SK-N-SH (cell line): ENCODE measurements at regions of chr1 and their contacts with region 1.

Region 1: GRCh38 chr1:27300341-27301051 is 21.5 kb upstream of the TMEM222 start:
- DNase-seq: peak; percentile 90
- H3K4me3 ChIP-seq: peak overlapping the region; percentile 12 to 14; a peak in 2 of 4 replicates
- H3K27ac ChIP-seq: peak overlapping the region; percentile 92 to 99
- H3K4me1 ChIP-seq: peaks cover 28 to 52% of the 10 kb centered on the region in 2 experiments
- H3K27me3 ChIP-seq: no peaks in the 10 kb centered on the region
- CTCF ChIP-seq: peak; percentile 92
- EP300 ChIP-seq: peak; percentile 40 to 70; a peak in 3 of 4 replicates
- RAD21 ChIP-seq: peak; percentile 96

Region 2: GRCh38 chr1:27192039-27192529 is 108.4 kb before region 1 on chr1:
- CTCF ChIA-PET with region 1: interaction called, 18 read pairs
- POLR2A ChIA-PET with region 1: no interaction called
- DNase-seq: no peak
- H3K4me3 ChIP-seq: no peak overlapping the region
- H3K27ac ChIP-seq: no peak overlapping the region
- H3K4me1 ChIP-seq: no peaks in the 10 kb centered on the region
- H3K27me3 ChIP-seq: no peaks in the 10 kb centered on the region
- CTCF ChIP-seq: no peak
- EP300 ChIP-seq: no peak
- RAD21 ChIP-seq: no peak

Region 3: GRCh38 chr1:27218736-27219135 is 81.8 kb before region 1 on chr1:
- CTCF ChIA-PET with region 1: no interaction called
- POLR2A ChIA-PET with region 1: no interaction called
- DNase-seq: no peak
- H3K4me3 ChIP-seq: no peak overlapping the region
- H3K27ac ChIP-seq: no peak overlapping the region
- H3K4me1 ChIP-seq: no peaks in the 10 kb centered on the region
- H3K27me3 ChIP-seq: no peaks in the 10 kb centered on the region
- CTCF ChIP-seq: no peak
- EP300 ChIP-seq: no peak
- RAD21 ChIP-seq: no peak

Region 4: GRCh38 chr1:27321813-27322577 is 21.5 kb after region 1 on chr1 and contains the start of gene TMEM222:
- CTCF ChIA-PET with region 1: interaction called, 185 read pairs
- POLR2A ChIA-PET with region 1: interaction called, 5 read pairs
- DNase-seq: peak; percentile 98
- H3K4me3 ChIP-seq: peak within 1 kb of the TSS; percentile 95 to 100
- H3K27ac ChIP-seq: peak within 1 kb of the TSS; percentile 79 to 92
- H3K4me1 ChIP-seq: peaks cover 11 to 24% of the 10 kb centered on the region in 2 experiments; a peak in 3 of 4 replicates
- H3K27me3 ChIP-seq: no peaks in the 10 kb centered on the region
- CTCF ChIP-seq: no peak
- EP300 ChIP-seq: peak; percentile 20 to 57; a peak in 2 of 4 replicates
- RAD21 ChIP-seq: no peak
- polyA plus RNA-seq, gene TMEM222: 51.7 and 52.0 TPM in 2 replicates

Region 5: GRCh38 chr1:27365372-27366112 is 65.0 kb after region 1 on chr1:
- CTCF ChIA-PET with region 1: interaction called, 92 read pairs
- POLR2A ChIA-PET with region 1: interaction called, 24 read pairs
- DNase-seq: peak; percentile 97
- H3K4me3 ChIP-seq: peak overlapping the region; percentile 69 to 89
- H3K27ac ChIP-seq: peak overlapping the region; percentile 84 to 94
- H3K4me1 ChIP-seq: peaks cover 4 to 14% of the 10 kb centered on the region in 2 experiments; a peak in 2 of 4 replicates
- H3K27me3 ChIP-seq: no peaks in the 10 kb centered on the region
- CTCF ChIP-seq: no peak
- EP300 ChIP-seq: peak in 1 of 2 experiments; percentile 66; a peak in 3 of 4 replicates
- RAD21 ChIP-seq: no peak

Region 6: GRCh38 chr1:27392096-27392777 is 91.7 kb after region 1 on chr1 and contains the start of gene GPR3:
- CTCF ChIA-PET with region 1: interaction called, 731 read pairs
- POLR2A ChIA-PET with region 1: interaction called, 14 read pairs
- DNase-seq: peak; percentile 99
- H3K4me3 ChIP-seq: peak within 1 kb of the TSS; percentile 71 to 94
- H3K27ac ChIP-seq: peak within 1 kb of the TSS; percentile 34 to 60; a peak in 2 of 4 replicates
- H3K4me1 ChIP-seq: peaks cover 0 to 28% of the 10 kb centered on the region in 2 experiments; a peak in 2 of 4 replicates
- H3K27me3 ChIP-seq: no peaks in the 10 kb centered on the region; the same call in 1 of the 2 replicates
- CTCF ChIP-seq: peak; percentile 64
- EP300 ChIP-seq: no peak
- RAD21 ChIP-seq: peak; percentile 45
- polyA plus RNA-seq, gene GPR3: 5.8 and 6.0 TPM in 2 replicates